ENCODE measurements at regions of chr12 and their contacts with region 1.

Region 1: DNA sequence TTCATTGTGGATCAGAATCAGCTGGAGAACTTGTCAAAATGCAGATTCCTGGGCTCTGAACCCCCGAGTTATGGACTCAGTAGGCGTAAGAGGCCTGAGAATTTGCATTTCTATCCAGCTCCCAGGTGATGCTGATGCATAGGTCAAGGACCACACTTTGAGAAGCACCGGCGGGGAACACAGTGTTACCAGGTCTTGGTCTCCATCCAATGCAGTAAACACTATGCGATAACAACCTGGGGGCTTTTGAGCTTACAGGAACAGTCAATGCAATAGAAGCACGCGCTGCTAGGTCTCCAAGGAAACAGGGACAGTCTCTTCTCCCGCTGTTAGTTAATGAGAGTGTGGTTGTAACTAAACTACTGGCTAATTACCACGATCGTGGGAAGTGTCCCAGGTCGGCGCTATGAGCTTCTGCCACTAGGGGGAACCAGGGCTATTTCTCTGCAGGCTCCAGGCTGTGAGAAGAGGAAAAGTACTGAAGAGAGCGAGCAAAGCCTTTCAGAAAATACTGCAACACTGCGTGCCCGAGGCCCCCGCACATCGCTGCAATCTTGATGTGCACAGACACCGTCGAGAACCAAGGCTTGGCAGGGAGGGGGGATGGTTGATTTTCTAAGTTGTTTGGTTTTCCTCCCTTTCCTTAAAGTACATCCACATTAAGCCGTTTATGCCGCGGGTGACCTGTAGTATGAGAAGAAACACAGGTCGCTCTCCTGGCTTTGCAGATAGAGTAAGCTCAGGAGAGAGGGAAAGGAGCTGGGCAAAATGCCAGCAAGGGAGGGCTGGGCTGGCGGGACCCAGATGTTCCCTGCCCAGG is 52.0 kb upstream of the KCNA1 start:
- DNase-seq: peak; percentile 30 to 35
- ATAC-seq: peak; percentile 88 to 89
- H3K4me3 ChIP-seq: peak overlapping the region; percentile 1 to 24 (median 13)
- H3K27ac ChIP-seq: no peak overlapping the region
- H3K4me1 ChIP-seq: peaks cover 5 to 9% of the 10 kb centered on the region in 2 donors
- H3K27me3 ChIP-seq: no peaks in the 10 kb centered on the region
- CTCF ChIP-seq: peak; percentile 63 to 87 (median 72)
- POLR2A ChIP-seq: no peak

Region 2: DNA sequence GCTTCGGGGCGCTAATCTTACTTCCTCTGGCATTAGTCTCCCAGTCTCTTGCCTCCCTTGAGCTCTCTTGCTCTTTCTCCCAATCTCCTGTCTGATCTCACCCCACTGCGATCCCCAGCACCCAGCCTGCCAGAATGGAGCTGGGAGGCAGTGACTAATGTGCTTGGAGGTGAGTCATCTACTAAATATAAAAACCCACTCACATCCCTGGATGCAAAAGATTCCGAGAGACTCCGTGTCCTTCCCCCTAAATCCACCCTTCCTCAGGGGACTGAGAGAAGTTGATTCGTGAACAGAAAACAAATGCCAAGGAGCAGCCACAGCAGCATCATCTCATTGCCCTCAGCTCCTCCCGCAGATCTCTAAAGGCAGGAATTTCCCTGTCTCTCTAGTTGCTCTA is 140.3 kb after region 1 on chr12:
- in situ Hi-C with region 1: loop called (anchors 5 to 10 kb)
- intact Hi-C with region 1: loop called (anchors 1 kb)
- DNase-seq: peak; percentile 56 to 79
- ATAC-seq: peak; percentile 97 to 98
- H3K4me3 ChIP-seq: no peak overlapping the region
- H3K27ac ChIP-seq: peak overlapping the region; percentile 56 to 72 (median 66)
- H3K4me1 ChIP-seq: peaks cover 11 to 13% of the 10 kb centered on the region in 2 donors
- H3K27me3 ChIP-seq: peaks cover 0 to 3% (median 0%) of the 10 kb centered on the region in 3 donors
- CTCF ChIP-seq: no peak
- POLR2A ChIP-seq: no peak

Region 3: GRCh38 chr12:5003020-5003666 is 145.5 kb after region 1 on chr12:
- in situ Hi-C with region 1: loop called (anchors 5 to 10 kb)
- intact Hi-C with region 1: loop called (anchors 1 kb)
- DNase-seq: peak; percentile 41 to 62
- ATAC-seq: peak; percentile 83 to 89
- H3K4me3 ChIP-seq: no peak overlapping the region
- H3K27ac ChIP-seq: no peak overlapping the region
- H3K4me1 ChIP-seq: peaks cover 3 to 4% of the 10 kb centered on the region in 2 donors
- H3K27me3 ChIP-seq: no peaks in the 10 kb centered on the region
- CTCF ChIP-seq: peak; percentile 77 to 92 (median 86)
- POLR2A ChIP-seq: no peak

Region 4: DNA sequence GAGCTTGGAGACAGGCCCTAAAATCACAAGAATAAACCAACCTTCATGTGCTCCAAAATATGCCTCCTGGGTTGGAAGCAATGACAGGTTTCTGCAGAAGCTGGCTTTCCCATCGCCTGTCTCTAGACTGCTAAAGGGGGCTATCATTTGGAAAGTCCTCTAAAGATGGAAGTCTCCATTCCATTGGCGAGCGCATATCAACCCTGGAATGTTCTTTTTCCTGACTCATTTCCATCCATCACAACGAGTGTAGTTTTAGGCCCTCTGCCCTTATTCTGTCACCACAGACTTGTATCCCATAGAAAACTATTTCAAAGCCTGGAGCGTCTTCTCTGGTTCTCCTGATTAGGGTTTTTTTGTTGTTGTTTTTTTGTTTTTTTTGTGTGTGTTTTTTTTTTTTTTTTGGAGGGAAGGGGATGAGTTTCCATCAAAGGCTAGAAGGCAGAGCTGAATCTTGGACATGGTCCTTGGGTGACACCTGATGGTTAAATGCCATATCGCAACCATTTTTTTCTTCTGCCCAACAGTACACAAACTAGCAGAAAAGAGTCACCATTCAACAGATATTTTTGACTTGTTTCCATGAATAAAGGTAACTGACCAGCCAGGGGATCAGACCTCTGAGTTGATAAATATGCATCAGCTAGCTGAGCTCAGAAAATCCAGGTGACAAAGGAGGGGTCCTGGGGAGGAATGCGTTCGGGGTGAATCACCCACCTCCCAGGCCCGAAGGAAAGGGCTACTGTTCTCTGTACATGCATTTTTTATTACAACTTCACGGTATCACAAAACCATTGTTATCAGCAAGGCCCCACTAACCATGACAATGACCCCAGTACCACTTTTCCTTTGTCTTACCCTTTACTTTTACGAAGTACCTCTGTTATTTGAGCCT is 226.5 kb after region 1 on chr12:
- in situ Hi-C with region 1: loop called (anchors 10 kb)
- intact Hi-C with region 1: loop called (anchors 2 kb)
- DNase-seq: no peak
- ATAC-seq: peak; percentile 56 to 64
- H3K4me3 ChIP-seq: no peak overlapping the region
- H3K27ac ChIP-seq: no peak overlapping the region
- H3K4me1 ChIP-seq: no peaks in the 10 kb centered on the region
- H3K27me3 ChIP-seq: no peaks in the 10 kb centered on the region
- CTCF ChIP-seq: peak; percentile 27 to 75 (median 53)
- POLR2A ChIP-seq: no peak